A549 (cell line): ENCODE measurements at regions of chr3 and their contacts with region 1.

Region 1: DNA sequence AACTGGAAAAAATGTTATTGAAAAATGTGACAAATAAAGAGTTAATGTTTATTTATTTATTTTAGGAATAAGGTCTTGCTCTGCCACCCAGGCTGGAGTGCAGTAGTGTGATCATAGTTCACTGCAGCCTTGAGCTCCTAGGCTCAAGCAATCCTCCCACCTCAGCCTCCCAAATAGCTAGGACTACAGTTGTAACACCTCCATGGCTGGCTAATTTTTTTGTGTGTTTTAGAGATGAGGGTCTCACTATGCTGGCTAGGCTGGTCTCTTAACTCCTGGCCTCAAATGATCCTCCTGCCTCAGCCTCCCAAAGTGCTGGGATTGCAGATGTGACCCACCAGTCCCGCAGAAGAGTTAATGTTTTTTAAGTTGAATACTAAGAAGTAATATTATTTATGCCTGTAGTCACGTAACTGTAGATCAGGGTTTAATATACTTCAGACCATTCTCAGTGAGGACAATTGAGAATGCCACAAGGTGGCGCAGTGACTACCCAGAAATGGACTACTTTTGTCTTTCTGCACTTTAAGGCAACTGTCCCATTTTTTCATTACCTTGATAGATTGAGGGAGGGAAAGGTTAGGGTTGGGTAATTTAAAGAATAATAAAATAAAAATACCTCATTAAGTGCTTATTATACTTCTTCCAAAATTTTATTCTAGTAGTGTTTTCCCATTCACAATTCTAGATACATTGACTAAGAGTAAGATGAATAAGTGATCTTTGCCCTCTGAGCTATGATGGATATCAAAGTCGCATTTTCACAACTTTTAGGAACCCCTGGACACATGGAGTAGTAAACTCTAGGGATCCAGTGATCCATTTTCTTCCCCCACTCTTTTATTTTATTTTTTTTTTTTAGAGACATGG is 6.0 kb downstream of the MUC13 start:
- DNase-seq: peak; percentile 38 to 73
- ATAC-seq: peak; percentile 77 to 92; a peak in 5 of 6 replicates
- H3K4me3 ChIP-seq: no peak overlapping the region
- H3K27ac ChIP-seq: peak overlapping the region; percentile 33 to 69; a peak in 3 of 6 replicates
- H3K4me1 ChIP-seq: peaks cover 13% of the 10 kb centered on the region; the same call in 1 of the 3 replicates
- CTCF ChIP-seq: peak; percentile 93
- EP300 ChIP-seq: no peak
- POLR2A ChIP-seq: no peak
- RAD21 ChIP-seq: peak; percentile 82 to 86

Region 2: DNA sequence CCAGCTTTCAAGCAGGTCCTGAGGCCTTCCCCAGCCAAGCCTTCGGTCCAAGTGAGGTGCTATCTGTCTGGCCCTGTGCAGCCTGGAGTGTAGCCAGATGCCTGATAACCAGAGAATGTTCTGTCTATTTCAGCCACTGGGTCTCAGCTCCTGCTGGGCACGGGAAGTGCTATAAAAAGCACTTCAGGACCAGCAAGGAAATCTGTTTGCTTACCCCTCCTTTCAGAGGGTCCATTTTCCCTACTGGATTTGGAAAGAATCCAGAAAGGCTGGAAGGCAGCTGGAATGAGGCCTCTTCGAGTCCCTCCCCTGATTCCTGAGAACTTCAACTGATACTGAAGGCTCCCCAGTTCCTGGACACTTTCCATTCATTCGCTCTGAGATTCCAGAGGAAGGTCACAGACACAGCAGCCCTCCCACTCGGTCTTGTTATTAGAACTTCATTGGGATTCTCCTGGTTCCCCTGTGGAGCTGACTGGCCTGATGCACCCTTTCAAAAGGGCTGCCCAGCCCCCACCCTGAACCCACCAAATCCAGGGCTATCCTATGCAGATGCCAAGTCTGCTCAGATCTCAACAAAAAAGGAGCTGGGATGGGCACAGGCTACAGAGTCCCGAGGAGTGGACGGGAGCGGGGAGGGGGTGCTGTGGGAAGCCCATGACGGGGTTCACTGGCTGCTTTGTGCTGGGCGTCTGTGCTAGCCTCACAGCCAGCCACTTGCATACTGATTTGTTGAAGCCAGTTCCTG is 127.9 kb before region 1 on chr3:
- CTCF ChIA-PET with region 1: no interaction called
- POLR2A ChIA-PET with region 1: no interaction called
- DNase-seq: no peak
- ATAC-seq: peak; percentile 16 to 37; a peak in 4 of 6 replicates
- H3K4me3 ChIP-seq: no peak overlapping the region
- H3K27ac ChIP-seq: peak overlapping the region; percentile 43 to 67; a peak in 5 of 6 replicates
- H3K4me1 ChIP-seq: peaks cover 18% of the 10 kb centered on the region
- CTCF ChIP-seq: no peak
- EP300 ChIP-seq: no peak
- POLR2A ChIP-seq: no peak
- RAD21 ChIP-seq: no peak

Region 3: GRCh38 chr3:124916837-124917409 is 11.6 kb before region 1 on chr3:
- CTCF ChIA-PET with region 1: interaction called, 13 read pairs
- POLR2A ChIA-PET with region 1: no interaction called
- DNase-seq: no peak
- ATAC-seq: no peak
- H3K4me3 ChIP-seq: no peak overlapping the region
- H3K27ac ChIP-seq: no peak overlapping the region
- H3K4me1 ChIP-seq: no peaks in the 10 kb centered on the region
- CTCF ChIP-seq: no peak
- EP300 ChIP-seq: no peak
- POLR2A ChIP-seq: no peak
- RAD21 ChIP-seq: no peak

Region 4: DNA sequence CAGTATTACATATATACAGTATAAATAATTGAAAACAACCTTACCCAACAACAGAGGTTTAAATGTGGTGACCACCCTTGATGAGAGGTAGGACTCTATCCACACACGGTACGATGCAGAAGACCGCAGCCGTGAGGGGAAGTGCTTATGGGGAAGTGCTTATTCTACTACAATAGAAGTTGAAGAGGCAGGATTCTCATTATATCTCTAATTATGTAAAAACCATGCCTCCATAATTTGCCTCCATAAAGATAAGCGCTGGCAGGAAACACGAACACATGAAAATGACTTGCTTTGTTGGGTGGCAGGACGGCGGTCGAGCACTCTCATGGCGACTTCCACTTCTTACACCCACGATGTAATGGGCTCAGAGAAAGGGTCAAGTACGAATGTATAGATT is 13.2 kb after region 1 on chr3:
- CTCF ChIA-PET with region 1: interaction called, 14 read pairs
- POLR2A ChIA-PET with region 1: no interaction called
- DNase-seq: no peak
- ATAC-seq: no peak
- H3K4me3 ChIP-seq: no peak overlapping the region
- H3K27ac ChIP-seq: no peak overlapping the region
- H3K4me1 ChIP-seq: no peaks in the 10 kb centered on the region
- CTCF ChIP-seq: no peak
- EP300 ChIP-seq: no peak
- POLR2A ChIP-seq: no peak
- RAD21 ChIP-seq: no peak

Region 5: GRCh38 chr3:125585595-125586223 is 657.1 kb after region 1 on chr3:
- CTCF ChIA-PET with region 1: interaction called, 22 read pairs
- POLR2A ChIA-PET with region 1: no interaction called
- DNase-seq: peak; percentile 43 to 64
- ATAC-seq: peak; percentile 64 to 83; a peak in 4 of 6 replicates
- H3K4me3 ChIP-seq: no peak overlapping the region
- H3K27ac ChIP-seq: no peak overlapping the region
- H3K4me1 ChIP-seq: no peaks in the 10 kb centered on the region
- CTCF ChIP-seq: peak; percentile 76
- EP300 ChIP-seq: no peak
- POLR2A ChIP-seq: no peak
- RAD21 ChIP-seq: peak; percentile 72 to 79

Region 6: GRCh38 chr3:125622381-125622788 is 693.8 kb after region 1 on chr3:
- CTCF ChIA-PET with region 1: no interaction called
- POLR2A ChIA-PET with region 1: no interaction called
- DNase-seq: no peak
- ATAC-seq: no peak
- H3K4me3 ChIP-seq: no peak overlapping the region
- H3K27ac ChIP-seq: no peak overlapping the region; a peak in 1 of 6 replicates
- H3K4me1 ChIP-seq: no peaks in the 10 kb centered on the region
- CTCF ChIP-seq: no peak
- EP300 ChIP-seq: no peak
- POLR2A ChIP-seq: no peak
- RAD21 ChIP-seq: no peak